ENCODE measurements at regions of chr6 and their contacts with region 1.

Region 1: GRCh38 chr6:107045826-107046613 is 18.0 kb downstream of the MTRES1 start:
- DNase-seq: no peak
- ATAC-seq: no peak
- H3K4me3 ChIP-seq: no peak overlapping the region
- H3K27ac ChIP-seq: no peak overlapping the region
- H3K4me1 ChIP-seq: no peaks in the 10 kb centered on the region
- H3K27me3 ChIP-seq: no peaks in the 10 kb centered on the region
- CTCF ChIP-seq: no peak

Region 2: GRCh38 chr6:107009499-107009898 is 36.5 kb before region 1 on chr6:
- CTCF ChIA-PET with region 1: no interaction called
- POLR2A ChIA-PET with region 1: no interaction called
- in situ Hi-C with region 1: no loop called
- intact Hi-C with region 1: no loop called
- DNase-seq: no peak
- ATAC-seq: no peak
- H3K4me3 ChIP-seq: no peak overlapping the region
- H3K27ac ChIP-seq: no peak overlapping the region
- H3K4me1 ChIP-seq: no peaks in the 10 kb centered on the region
- H3K27me3 ChIP-seq: no peaks in the 10 kb centered on the region
- CTCF ChIP-seq: no peak

Region 3: GRCh38 chr6:107033126-107033525 is 12.9 kb before region 1 on chr6:
- CTCF ChIA-PET with region 1: no interaction called
- POLR2A ChIA-PET with region 1: interaction called, 17 read pairs
- in situ Hi-C with region 1: no loop called
- intact Hi-C with region 1: no loop called
- DNase-seq: no peak
- ATAC-seq: no peak
- H3K4me3 ChIP-seq: no peak overlapping the region
- H3K27ac ChIP-seq: no peak overlapping the region
- H3K4me1 ChIP-seq: no peaks in the 10 kb centered on the region
- H3K27me3 ChIP-seq: no peaks in the 10 kb centered on the region
- CTCF ChIP-seq: no peak

Region 4: GRCh38 chr6:107479089-107479690 is 433.2 kb after region 1 on chr6:
- CTCF ChIA-PET with region 1: no interaction called
- POLR2A ChIA-PET with region 1: interaction called, 12 read pairs
- in situ Hi-C with region 1: no loop called
- intact Hi-C with region 1: no loop called
- DNase-seq: no peak
- ATAC-seq: no peak
- H3K4me3 ChIP-seq: no peak overlapping the region
- H3K27ac ChIP-seq: no peak overlapping the region
- H3K4me1 ChIP-seq: no peaks in the 10 kb centered on the region
- H3K27me3 ChIP-seq: no peaks in the 10 kb centered on the region; the same call in 1 of the 2 replicates
- CTCF ChIP-seq: no peak